Caco-2 (cell line): ENCODE measurements at regions of chr7 and their contacts with region 1.

Region 1: DNA sequence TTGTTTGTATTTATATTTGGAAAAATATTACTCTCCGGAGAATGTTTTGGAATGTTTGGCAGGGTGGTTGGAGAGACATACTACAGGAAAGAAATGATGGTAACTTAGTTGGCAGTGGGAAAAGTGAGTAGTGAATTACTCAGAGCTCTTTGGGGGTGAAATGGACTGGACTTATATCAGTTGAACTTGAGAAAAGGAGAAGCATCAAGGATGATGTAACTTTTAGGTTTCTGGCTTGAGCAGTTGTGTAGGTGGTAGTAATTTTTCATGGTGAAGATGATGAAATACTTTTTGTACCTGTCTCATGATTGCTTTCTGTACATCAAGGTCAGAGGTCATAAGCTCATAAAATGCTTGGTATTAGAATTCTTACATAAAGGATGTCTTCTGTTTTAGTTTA is 617.2 kb downstream of the AUTS2 start:
- DNase-seq: no peak
- H3K4me3 ChIP-seq: no peak overlapping the region
- H3K4me3 Mint-ChIP-seq: no peak overlapping the region
- H3K27ac Mint-ChIP-seq: peak overlapping the region; percentile 61
- H3K4me1 ChIP-seq: peaks cover 84% of the 10 kb centered on the region
- H3K4me1 Mint-ChIP-seq: peaks cover 38% of the 10 kb centered on the region
- H3K27me3 ChIP-seq: no peaks in the 10 kb centered on the region
- H3K27me3 Mint-ChIP-seq: no peaks in the 10 kb centered on the region
- CTCF ChIP-seq: no peak

Region 2: GRCh38 chr7:70113536-70113935 is 102.0 kb before region 1 on chr7:
- CTCF ChIA-PET with region 1: no interaction called
- POLR2A ChIA-PET with region 1: no interaction called
- intact Hi-C with region 1: no loop called
- DNase-seq: no peak
- H3K4me3 ChIP-seq: no peak overlapping the region
- H3K4me3 Mint-ChIP-seq: no peak overlapping the region
- H3K27ac Mint-ChIP-seq: no peak overlapping the region
- H3K4me1 ChIP-seq: peaks cover 3% of the 10 kb centered on the region; the same call in 1 of the 2 replicates
- H3K4me1 Mint-ChIP-seq: peaks cover 5% of the 10 kb centered on the region
- H3K27me3 ChIP-seq: no peaks in the 10 kb centered on the region
- H3K27me3 Mint-ChIP-seq: peaks cover 4% of the 10 kb centered on the region
- CTCF ChIP-seq: no peak

Region 3: DNA sequence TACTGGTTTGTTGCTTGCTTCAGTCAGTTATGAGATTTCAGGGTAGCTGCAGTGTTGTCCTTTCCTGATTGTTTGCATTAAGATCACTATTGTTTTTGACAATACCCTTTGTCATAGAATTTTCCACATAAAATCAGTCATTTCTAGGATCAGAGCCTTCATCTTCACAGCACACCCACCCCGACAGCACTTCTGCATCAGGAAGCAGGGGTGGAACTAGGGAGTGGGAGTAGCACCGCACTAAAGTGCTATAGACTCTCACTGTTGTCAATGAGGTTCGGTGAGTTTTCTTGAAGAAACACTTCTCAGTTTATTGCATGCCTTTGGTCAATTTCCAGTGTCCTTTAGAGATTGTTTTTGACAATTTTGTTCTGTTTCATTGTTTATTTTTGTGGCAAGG is 15.3 kb after region 1 on chr7:
- CTCF ChIA-PET with region 1: no interaction called
- POLR2A ChIA-PET with region 1: no interaction called
- intact Hi-C with region 1: loop called (anchors 1 kb)
- DNase-seq: no peak
- H3K4me3 ChIP-seq: no peak overlapping the region
- H3K4me3 Mint-ChIP-seq: no peak overlapping the region
- H3K27ac Mint-ChIP-seq: no peak overlapping the region
- H3K4me1 ChIP-seq: peaks cover 5% of the 10 kb centered on the region; the same call in 1 of the 2 replicates
- H3K4me1 Mint-ChIP-seq: no peaks in the 10 kb centered on the region
- H3K27me3 ChIP-seq: no peaks in the 10 kb centered on the region
- H3K27me3 Mint-ChIP-seq: no peaks in the 10 kb centered on the region
- CTCF ChIP-seq: no peak

Region 4: DNA sequence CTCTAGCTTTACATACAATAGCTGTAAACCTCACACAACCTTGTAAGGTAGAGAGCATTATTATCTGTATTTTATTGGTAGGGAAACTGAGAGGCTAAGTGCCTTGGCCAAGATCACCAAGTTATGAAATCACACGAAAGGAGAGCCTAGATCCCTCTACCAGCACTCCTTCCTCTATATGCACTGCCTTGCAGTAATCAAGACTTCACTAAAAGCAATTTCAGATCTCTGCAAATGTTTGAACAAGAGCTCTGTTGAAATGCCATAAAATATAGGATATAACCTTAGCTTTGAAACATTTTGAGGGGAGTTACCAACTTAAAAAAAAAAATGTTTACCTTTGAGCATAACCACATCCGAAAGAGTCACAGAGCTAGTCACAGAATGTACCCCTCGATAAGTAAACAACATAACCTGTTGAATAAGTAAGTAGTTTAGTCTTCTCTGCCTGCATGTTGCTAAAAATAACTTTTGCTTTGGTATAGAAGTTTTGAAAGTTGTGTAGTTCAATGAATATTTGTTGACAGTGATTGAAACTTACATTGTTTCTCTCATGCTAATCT is 92.1 kb after region 1 on chr7:
- CTCF ChIA-PET with region 1: no interaction called
- POLR2A ChIA-PET with region 1: no interaction called
- intact Hi-C with region 1: loop called (anchors 10 kb)
- DNase-seq: no peak
- H3K4me3 ChIP-seq: no peak overlapping the region
- H3K4me3 Mint-ChIP-seq: no peak overlapping the region
- H3K27ac Mint-ChIP-seq: no peak overlapping the region
- H3K4me1 ChIP-seq: no peaks in the 10 kb centered on the region
- H3K4me1 Mint-ChIP-seq: peaks cover 5% of the 10 kb centered on the region
- H3K27me3 ChIP-seq: no peaks in the 10 kb centered on the region
- H3K27me3 Mint-ChIP-seq: no peaks in the 10 kb centered on the region
- CTCF ChIP-seq: no peak